Gastrocnemius medialis (tissue), 4 donors: ENCODE measurements at regions of chr1 and their contacts with region 1.

Region 1: GRCh38 chr1:88956003-88956402 is 36.4 kb downstream of the KYAT3 start:
- DNase-seq: no peak
- ATAC-seq: no peak
- H3K4me3 ChIP-seq: no peak overlapping the region
- H3K27ac ChIP-seq: no peak overlapping the region
- H3K4me1 ChIP-seq: no peaks in the 10 kb centered on the region
- H3K27me3 ChIP-seq: no peaks in the 10 kb centered on the region
- CTCF ChIP-seq: no peak
- POLR2A ChIP-seq: no peak

Region 2: DNA sequence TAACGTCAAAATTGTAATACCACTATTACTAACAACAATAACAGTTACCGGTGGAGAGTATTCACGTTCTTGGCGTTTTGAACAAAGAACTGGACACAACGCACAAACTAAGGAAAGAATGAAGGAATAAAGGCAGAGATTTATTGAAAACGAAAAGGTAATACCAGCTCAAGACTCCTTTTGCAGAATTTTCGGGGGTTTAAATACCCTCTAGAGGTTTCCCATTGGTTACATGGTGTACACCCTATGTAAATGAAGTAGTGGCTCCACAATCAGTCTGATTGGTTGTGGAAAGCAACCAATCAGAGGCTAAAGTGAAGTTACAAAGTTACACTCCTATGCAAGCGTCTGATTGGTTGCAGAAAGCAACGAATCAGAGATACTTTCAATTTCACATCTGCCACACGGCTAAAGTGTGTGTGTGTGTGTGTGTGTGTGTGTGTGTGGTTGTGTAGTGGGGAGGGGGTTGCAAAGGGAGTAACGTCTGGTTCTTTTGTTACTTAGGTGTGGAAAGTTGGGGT is 63.6 kb before region 1 on chr1:
- in situ Hi-C with region 1: no loop called
- intact Hi-C with region 1: no loop called
- DNase-seq: no peak
- ATAC-seq: peak in 1 of 2 donors; percentile 42
- H3K4me3 ChIP-seq: peak overlapping the region; percentile 95 to 100 (median 98)
- H3K27ac ChIP-seq: peak overlapping the region; percentile 92 to 99 (median 97)
- H3K4me1 ChIP-seq: peaks cover 23 to 28% of the 10 kb centered on the region in 2 donors
- H3K27me3 ChIP-seq: no peaks in the 10 kb centered on the region
- CTCF ChIP-seq: no peak
- POLR2A ChIP-seq: no peak

Region 3: GRCh38 chr1:88936760-88937342 is 19.2 kb before region 1 on chr1:
- in situ Hi-C with region 1: no loop called
- intact Hi-C with region 1: loop called (anchors 1 kb)
- DNase-seq: no peak
- ATAC-seq: no peak
- H3K4me3 ChIP-seq: no peak overlapping the region
- H3K27ac ChIP-seq: no peak overlapping the region
- H3K4me1 ChIP-seq: no peaks in the 10 kb centered on the region
- H3K27me3 ChIP-seq: no peaks in the 10 kb centered on the region
- CTCF ChIP-seq: no peak
- POLR2A ChIP-seq: no peak